ENCODE measurements at regions of chr13 and their contacts with region 1.

Region 1: DNA sequence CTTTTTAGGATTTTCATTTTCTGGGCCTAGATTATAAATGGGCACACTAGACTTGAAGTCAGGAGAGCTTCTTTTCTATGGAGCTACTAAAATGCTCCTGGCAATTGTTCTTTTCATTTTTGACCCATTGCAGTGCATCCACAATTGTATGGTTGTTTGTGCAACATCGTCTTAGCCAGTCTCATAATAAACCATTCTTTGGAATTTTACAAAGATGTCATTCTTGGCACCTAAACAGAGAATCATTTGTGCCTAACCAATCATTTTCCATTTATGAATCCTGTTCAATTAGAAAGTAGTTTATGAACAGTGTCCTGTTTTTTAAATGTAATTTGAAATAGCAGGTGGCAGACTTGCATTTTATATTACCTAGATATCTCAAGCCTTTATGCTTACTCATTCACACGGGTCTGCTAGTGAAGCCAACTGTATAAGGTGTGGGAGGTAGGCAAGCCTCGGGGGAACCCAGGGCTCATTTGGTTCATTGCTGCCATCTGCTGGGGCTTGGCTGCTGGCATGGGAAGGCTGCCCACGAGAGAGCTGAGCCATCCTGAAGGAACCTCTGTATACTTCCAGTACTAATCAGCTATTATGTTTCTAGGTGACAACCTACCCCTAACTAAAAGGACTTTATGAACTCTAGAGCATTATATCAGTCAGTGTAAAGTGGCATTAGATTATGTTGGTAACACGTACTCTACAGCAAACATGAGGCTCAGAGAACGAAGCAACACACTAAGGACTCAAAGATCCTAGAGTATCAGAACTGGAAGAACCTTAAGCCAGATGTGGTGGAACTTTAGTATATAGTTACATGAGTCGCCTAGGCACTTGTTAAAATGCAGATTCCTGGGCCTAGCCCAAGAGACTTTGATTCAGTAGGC is 60.0 kb downstream of the TPT1 start:
- DNase-seq: peak; percentile 91

Region 2: GRCh38 chr13:45047394-45048310 is 233.3 kb before region 1 on chr13:
- in situ Hi-C with region 1: loop called (anchors 25 kb)
- DNase-seq: peak; percentile 93

Measured in G401 (cell line).